ENCODE measurements at regions of chr10 and their contacts with region 1.

Region 1: GRCh38 chr10:92957223-92958010 is 103.2 kb upstream of the CYP26C1 start:
- DNase-seq: no peak
- H3K4me3 ChIP-seq: no peak overlapping the region
- H3K27ac ChIP-seq: no peak overlapping the region
- H3K4me1 ChIP-seq: no peaks in the 10 kb centered on the region
- H3K27me3 ChIP-seq: no peaks in the 10 kb centered on the region
- CTCF ChIP-seq: no peak
- POLR2A ChIP-seq: no peak

Region 2: GRCh38 chr10:92366412-92367021 is 590.9 kb before region 1 on chr10:
- intact Hi-C with region 1: no loop called
- DNase-seq: no peak
- H3K4me3 ChIP-seq: no peak overlapping the region
- H3K27ac ChIP-seq: no peak overlapping the region
- H3K4me1 ChIP-seq: no peaks in the 10 kb centered on the region
- H3K27me3 ChIP-seq: no peaks in the 10 kb centered on the region
- CTCF ChIP-seq: no peak
- POLR2A ChIP-seq: no peak

Region 3: GRCh38 chr10:92923416-92923815 is 34.0 kb before region 1 on chr10:
- intact Hi-C with region 1: loop called (anchors 2 kb)
- DNase-seq: no peak
- H3K4me3 ChIP-seq: no peak overlapping the region
- H3K27ac ChIP-seq: no peak overlapping the region
- H3K4me1 ChIP-seq: no peaks in the 10 kb centered on the region
- H3K27me3 ChIP-seq: no peaks in the 10 kb centered on the region
- CTCF ChIP-seq: no peak
- POLR2A ChIP-seq: no peak

Region 4: GRCh38 chr10:92938841-92939240 is 18.6 kb before region 1 on chr10:
- intact Hi-C with region 1: no loop called
- DNase-seq: no peak
- H3K4me3 ChIP-seq: no peak overlapping the region
- H3K27ac ChIP-seq: no peak overlapping the region
- H3K4me1 ChIP-seq: no peaks in the 10 kb centered on the region
- H3K27me3 ChIP-seq: no peaks in the 10 kb centered on the region
- CTCF ChIP-seq: no peak
- POLR2A ChIP-seq: no peak